Right ventricle myocardium inferior (tissue), 1 donor: ENCODE measurements at regions of chr2 and their contacts with region 1.

Region 1: GRCh38 chr2:131413148-131413747 is 49.3 kb upstream of the RAB6D start:
- DNase-seq: no peak
- ATAC-seq: no peak

Region 2: DNA sequence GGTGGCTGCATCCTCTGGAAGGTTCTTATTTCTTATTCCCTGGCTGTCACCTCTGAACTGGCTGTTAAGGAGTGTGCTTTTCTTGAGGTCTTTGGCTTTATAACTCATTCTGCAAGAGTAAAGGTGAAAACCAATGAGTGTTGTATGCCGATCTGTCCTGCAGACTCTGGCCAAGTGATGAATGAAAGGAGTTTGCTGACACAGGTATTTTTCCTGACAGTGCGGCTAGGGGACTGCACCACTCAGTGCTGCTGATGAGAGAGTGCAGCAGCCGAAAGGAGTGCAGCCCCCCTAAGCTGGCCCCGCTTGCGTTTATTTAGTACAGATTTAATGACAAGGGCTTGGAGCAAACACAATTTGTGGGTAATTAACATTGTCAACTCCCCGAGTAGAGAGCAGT is 91.0 kb before region 1 on chr2:
- intact Hi-C with region 1: no loop called
- DNase-seq: no peak
- ATAC-seq: no peak

Region 3: GRCh38 chr2:131517106-131517831 is 104.0 kb after region 1 on chr2:
- intact Hi-C with region 1: loop called (anchors 5 kb)
- DNase-seq: no peak
- ATAC-seq: no peak

Region 4: DNA sequence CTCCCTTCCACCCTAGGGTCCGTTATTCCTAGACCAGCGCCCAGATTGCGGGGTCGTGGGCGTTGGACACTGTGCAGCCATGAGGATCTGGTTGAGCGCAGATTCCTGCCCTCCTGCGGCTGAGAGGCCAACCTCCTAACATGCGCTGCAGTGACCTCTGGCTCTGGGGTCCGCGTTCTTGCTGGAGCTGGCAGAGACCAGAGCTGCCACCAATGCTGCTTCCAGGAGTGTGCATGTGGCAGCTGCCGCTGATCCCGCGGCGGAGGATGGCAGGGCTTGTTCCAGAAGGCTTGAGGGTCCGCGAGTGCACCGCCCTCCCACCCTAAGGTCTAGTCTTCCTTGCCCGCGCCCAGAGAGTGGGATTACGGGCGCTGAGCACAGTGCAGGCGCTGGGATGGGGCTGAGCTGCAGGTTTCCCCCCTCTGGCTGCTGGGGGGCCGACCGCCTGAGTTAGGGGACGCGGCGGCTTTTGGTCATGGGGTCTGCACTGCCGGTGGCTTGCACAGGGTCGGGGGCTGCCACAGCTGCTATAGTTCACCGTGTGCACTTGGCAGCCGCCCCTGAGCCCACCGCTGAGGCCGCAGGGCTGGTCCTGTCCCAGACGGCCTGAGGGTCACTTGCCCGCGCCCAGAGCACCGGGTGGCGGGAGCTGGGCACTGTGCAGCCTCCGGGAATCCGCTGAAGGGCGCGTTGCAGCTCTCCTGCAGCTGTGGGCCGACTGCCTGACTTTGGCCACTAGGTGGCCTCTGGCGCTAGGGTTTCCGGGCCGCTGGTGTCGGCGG is 260.3 kb after region 1 on chr2:
- intact Hi-C with region 1: loop called (anchors 2 kb)
- DNase-seq: peak; percentile 84
- ATAC-seq: peak; percentile 92

Region 5: DNA sequence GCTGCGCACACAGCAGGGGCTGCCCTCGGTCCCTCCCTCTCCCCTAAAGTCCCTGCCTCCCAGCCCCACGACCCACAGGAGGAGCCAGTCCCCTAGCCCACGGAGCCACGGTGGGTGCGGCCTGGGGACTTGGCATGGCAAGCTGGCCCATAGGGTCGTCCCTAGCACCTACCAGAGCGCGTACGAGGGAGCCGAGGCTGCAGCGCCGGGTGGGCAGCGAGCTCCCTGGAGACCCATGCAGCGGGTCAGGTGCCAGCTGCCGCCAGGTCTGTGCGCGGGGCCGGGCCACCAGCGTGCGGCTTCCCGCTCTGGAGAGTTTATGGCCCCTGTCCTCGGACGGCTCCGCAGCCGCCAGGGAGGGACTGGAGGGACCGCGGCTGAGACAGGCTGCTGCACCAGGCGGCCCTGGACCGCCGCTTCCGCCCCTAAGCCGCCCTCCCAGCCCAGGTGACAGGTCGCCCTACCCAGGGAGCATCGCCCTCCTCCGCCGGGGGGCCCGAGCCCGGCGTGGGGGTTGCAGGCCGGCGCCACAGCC is 388.0 kb after region 1 on chr2:
- intact Hi-C with region 1: loop called (anchors 10 kb)
- DNase-seq: no peak
- ATAC-seq: no peak